Activated T-helper 2 cell treated with anti-CD3 and anti-CD28 coated beads, Interferon-gamma antibody, Interleukin-2, Interleukin-4, amounts not matched to agents 10 μg/mL and 5 μg/mL and 100 μg/mL, durations not matched to agents 14 hours and 24 hours and 36 hours (primary cell): ENCODE measurements at regions of chr17 and their contacts with region 1.

Region 1: GRCh38 chr17:48997083-48997826 is at the start of gene IGF2BP1:
- DNase-seq: no peak
- H3K4me3 Mint-ChIP-seq: peak within 1 kb of the TSS; percentile 30
- H3K27ac Mint-ChIP-seq: peak within 1 kb of the TSS; percentile 39
- H3K4me1 Mint-ChIP-seq: peaks cover 9% of the 10 kb centered on the region
- H3K27me3 Mint-ChIP-seq: peaks cover 81% of the 10 kb centered on the region
- total RNA-seq, gene IGF2BP1: 0.09 and 0.32 TPM in 2 replicates

Region 2: DNA sequence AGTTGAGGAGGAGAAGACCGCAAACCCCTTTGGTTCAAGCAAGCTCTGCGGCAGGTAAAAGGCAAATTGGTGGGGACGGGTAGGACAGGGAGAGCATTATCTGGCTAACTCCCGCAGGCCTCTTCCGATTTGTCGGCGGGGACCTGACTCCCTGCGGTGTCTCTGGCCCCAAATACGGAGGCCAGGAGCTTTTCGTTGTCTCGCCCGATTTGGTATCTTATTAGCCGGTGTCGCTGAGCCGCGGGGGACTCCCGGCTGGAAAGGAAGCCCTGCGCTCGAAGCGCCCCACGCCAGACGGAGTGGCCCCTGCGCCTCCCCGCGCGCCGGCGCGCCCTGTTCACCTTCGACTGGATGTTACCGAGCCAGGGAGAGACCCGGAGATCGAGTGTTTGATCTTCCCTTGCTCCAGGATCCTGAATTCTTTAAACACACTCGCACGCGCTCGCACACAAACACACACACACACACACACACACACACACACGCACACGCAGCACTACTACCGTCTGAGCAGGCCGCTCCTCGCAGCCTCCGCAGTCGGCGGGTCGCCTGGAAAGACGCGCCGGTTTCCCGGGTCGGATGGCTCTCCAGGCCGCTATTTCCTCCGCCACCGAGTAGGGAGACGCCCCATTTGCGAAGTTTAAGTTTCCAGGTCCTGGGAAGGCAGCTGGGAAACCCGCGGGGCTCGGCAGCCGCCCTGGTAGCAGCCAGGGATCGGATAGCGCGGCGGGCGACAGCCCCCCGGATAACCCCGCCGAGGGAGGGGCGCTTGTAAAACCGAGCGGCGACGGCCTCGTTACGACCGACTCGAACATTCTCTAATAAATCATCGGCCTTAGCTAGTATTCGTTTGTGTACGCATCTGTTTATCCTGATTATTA is 278.3 kb before region 1 on chr17:
- intact Hi-C with region 1: loop called (anchors 5 kb)
- DNase-seq: no peak
- H3K4me3 Mint-ChIP-seq: no peak overlapping the region
- H3K27ac Mint-ChIP-seq: no peak overlapping the region
- H3K4me1 Mint-ChIP-seq: peaks cover 9% of the 10 kb centered on the region
- H3K27me3 Mint-ChIP-seq: peaks cover 82% of the 10 kb centered on the region

Region 3: DNA sequence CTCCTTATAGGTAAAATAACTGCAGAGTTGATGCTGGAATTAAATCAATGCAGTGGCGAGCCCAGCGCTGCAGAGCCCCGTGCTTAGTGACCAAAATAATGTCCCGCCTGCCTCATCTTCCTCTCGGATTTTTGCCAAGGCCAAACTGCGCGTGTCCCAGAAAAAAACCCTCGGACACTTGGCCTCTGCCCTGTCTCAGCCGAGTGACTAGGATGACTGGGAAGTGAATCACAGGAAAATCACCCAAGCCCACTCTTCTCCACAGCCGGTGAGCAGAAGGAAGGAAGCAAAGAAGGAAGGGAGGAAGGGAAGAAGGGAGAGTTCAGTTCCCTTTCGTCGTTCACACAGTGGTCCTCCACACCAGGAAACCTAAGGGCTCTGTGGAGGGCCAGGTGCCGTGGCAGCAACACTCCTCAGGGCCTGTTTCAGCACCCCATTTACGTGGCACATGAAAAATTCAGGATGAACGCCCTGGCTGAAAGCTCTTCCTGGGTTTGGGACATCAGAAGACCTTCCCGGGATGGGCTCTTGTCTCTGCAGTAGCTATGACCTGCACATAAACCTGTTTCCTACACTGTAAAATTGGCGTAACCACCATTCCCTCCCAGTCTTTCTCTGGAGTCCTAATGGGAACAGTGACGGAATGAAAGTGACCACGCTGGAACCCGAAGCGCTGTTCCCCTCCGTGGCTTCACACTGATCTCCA is 243.3 kb before region 1 on chr17:
- intact Hi-C with region 1: loop called (anchors 5 kb)
- DNase-seq: no peak
- H3K4me3 Mint-ChIP-seq: no peak overlapping the region
- H3K27ac Mint-ChIP-seq: no peak overlapping the region
- H3K4me1 Mint-ChIP-seq: no peaks in the 10 kb centered on the region
- H3K27me3 Mint-ChIP-seq: peaks cover 83% of the 10 kb centered on the region

Region 4: DNA sequence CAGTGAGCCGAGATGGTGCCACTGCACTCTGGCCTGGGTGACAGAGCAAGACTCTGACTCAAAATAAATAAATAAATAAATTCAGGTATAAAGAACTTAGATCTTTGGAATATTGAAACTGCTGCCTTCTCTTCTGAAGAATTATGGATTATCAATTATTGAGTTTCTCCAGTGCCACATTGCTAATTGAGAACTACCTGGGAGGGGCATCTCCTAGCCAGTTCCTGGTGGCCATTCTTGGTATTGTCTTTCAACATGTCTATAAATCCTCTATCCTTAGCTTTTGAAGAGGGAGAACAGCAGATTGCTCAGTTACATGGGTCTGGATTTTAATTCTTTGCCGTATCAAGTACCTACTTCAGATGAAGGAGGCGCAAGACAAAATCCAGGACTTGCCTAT is 137.2 kb before region 1 on chr17:
- intact Hi-C with region 1: no loop called
- DNase-seq: no peak
- H3K4me3 Mint-ChIP-seq: no peak overlapping the region
- H3K27ac Mint-ChIP-seq: no peak overlapping the region
- H3K4me1 Mint-ChIP-seq: peaks cover 21% of the 10 kb centered on the region
- H3K27me3 Mint-ChIP-seq: no peaks in the 10 kb centered on the region